Activated CD4-positive, alpha-beta T cell treated with anti-CD3 and anti-CD28 coated beads, Interleukin-2, amount 10 ng/mL, durations not matched to agents 7 days and 5 days (primary cell): ENCODE measurements at regions of chr2 and their contacts with region 1.

Region 1: DNA sequence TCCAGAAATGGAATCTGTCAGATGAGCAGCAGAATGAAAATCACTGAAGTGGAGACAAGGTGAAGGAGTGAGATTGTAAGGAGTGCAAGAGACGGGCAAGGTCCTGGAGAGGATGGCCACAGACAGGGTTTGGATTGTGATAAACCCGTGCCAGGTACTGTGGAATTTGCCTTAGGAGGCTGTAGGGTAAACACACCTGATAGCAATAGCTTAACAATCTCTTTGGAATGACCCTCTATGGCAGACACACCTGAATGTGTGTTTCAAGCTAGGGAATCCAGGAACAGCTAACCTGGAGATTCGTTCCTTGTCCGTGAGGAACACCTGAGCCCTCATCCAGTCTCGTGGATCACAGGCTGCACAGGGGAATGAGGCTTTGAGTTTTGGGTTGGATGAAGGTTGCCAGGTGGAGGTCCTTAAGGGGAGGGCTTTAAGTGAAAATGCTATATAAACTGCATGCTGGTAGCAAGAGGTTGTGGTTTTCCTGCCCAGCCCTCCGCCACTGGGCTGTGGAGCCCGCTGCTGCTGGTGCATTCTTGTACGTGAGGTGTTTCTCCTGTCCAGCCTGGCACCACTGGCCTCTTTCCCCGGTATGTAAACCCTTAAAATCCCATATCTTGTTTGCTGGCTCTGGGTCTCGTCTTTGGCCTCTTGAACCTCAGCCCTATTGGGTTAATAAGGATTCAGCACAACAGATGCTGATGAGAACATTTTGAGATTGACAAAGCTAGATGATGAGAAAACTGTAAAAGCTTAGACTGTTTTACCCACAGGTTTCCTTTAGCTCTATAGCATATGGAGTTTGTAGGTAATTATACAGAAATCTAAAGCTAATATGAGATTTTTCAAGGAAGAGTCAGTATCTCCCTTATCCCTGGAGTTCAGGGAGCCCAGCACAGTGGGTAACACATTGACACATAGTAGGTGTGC is 117.9 kb downstream of the ARHGAP15 start:
- DNase-seq: no peak
- H3K4me3 Mint-ChIP-seq: peak overlapping the region; percentile 31
- H3K27ac Mint-ChIP-seq: peak overlapping the region; percentile 65
- H3K4me1 Mint-ChIP-seq: peaks cover 27% of the 10 kb centered on the region
- H3K27me3 Mint-ChIP-seq: no peaks in the 10 kb centered on the region

Region 2: GRCh38 chr2:142954488-142954887 is 292.6 kb before region 1 on chr2:
- CTCF ChIA-PET with region 1: no interaction called
- POLR2A ChIA-PET with region 1: no interaction called
- DNase-seq: no peak
- H3K4me3 Mint-ChIP-seq: no peak overlapping the region
- H3K27ac Mint-ChIP-seq: no peak overlapping the region
- H3K4me1 Mint-ChIP-seq: no peaks in the 10 kb centered on the region
- H3K27me3 Mint-ChIP-seq: peaks cover 5% of the 10 kb centered on the region

Region 3: GRCh38 chr2:143034292-143035074 is 212.6 kb before region 1 on chr2:
- CTCF ChIA-PET with region 1: no interaction called
- POLR2A ChIA-PET with region 1: no interaction called
- DNase-seq: peak; percentile 75
- H3K4me3 Mint-ChIP-seq: no peak overlapping the region
- H3K27ac Mint-ChIP-seq: no peak overlapping the region
- H3K4me1 Mint-ChIP-seq: peaks cover 10% of the 10 kb centered on the region
- H3K27me3 Mint-ChIP-seq: peaks cover 2% of the 10 kb centered on the region

Region 4: DNA sequence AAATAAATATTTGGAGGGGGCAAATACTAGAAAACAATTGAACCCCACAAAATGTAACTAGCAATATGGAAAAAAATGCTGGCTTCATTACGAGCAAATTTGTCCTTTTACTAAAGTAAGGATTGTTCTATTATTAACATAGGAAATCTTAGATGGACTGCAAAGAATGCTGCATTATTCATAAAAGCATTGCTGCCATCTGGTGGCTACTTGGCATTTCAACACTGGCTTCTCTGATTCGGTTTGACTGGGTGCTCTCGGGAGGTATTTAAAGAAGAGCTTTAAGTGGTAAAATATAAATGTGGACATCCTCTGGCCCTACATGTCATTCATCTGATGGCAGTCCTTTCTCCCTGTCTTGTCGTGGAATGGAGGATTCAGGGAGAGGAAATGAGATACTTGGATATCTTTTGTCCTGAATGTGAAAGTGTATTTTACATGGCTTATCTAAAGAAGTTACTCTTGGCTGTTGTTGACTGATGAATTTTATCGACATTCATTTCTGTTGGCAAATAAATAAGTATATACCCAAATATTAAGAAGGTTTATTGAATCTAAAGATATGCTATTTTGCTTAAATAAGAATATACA is 12.4 kb after region 1 on chr2:
- CTCF ChIA-PET with region 1: interaction called, 15 read pairs
- POLR2A ChIA-PET with region 1: interaction called, 3 read pairs
- DNase-seq: peak; percentile 84
- H3K4me3 Mint-ChIP-seq: peak overlapping the region; percentile 59
- H3K27ac Mint-ChIP-seq: peak overlapping the region; percentile 94
- H3K4me1 Mint-ChIP-seq: peaks cover 79% of the 10 kb centered on the region
- H3K27me3 Mint-ChIP-seq: no peaks in the 10 kb centered on the region

Region 5: DNA sequence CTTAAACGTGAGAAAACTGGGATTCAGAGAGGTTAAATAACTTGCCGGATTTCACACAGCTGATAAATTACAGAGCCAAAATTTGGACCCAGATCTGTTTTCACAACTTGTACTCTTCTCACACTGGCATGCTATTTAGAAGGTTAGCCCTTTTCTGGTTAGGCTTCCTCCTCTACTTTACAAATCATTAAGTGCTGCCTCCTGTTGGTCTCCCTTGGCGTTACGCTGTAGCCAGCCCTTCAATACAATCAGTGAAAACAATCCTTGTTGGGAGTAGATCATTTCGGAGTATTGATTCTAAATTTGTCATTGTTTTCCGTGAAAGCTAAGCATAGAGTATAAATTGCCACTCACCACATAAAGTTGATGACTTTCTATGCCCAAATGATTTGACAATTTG is 35.6 kb after region 1 on chr2:
- CTCF ChIA-PET with region 1: no interaction called
- POLR2A ChIA-PET with region 1: no interaction called
- DNase-seq: no peak
- H3K4me3 Mint-ChIP-seq: no peak overlapping the region
- H3K27ac Mint-ChIP-seq: no peak overlapping the region
- H3K4me1 Mint-ChIP-seq: peaks cover 13% of the 10 kb centered on the region
- H3K27me3 Mint-ChIP-seq: no peaks in the 10 kb centered on the region